ENCODE measurements at regions of chr10 and their contacts with region 1.

Region 1: DNA sequence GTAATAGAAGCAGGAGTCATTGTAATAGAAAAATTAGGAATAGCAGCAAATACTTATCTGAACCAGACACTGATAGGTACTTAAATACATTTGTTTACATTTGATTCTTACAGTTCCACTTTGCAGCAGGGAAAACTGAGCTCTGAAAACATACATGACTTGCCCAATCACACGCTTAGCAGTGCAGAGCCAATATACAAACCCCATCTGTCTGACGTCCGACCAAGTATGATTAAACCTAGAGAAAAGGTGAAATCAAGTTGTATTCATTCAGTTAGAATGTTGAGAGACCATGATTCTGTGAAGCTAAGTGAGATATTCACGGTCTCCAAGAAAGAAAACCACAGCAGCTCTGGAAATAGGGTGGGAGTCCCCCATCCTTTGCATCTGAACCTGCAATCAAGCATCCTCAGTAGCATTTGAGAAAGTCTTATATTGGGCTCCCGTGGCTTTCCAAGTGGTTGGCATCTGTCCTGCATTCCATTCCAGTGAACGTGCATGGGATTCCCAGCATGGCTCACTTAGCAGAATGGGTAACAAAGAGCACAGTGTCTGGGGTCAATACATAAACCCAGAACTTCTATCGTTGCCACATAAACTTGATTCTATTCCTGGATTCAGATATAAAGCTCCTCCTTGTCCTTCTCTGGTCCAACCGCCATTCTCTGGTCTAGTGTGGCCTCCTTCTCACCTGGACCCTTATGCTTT is 148.7 kb upstream of the RSU1 start:
- DNase-seq: peak; percentile 91
- ATAC-seq: peak; percentile 90
- H3K4me3 ChIP-seq: no peak overlapping the region
- H3K27ac ChIP-seq: peak overlapping the region; percentile 89
- H3K4me1 ChIP-seq: peaks cover 33% of the 10 kb centered on the region
- H3K27me3 ChIP-seq: no peaks in the 10 kb centered on the region
- CTCF ChIP-seq: no peak

Region 2: GRCh38 chr10:16870331-16870730 is 95.6 kb before region 1 on chr10:
- CTCF ChIA-PET with region 1: no interaction called
- POLR2A ChIA-PET with region 1: no interaction called
- intact Hi-C with region 1: no loop called
- DNase-seq: no peak
- ATAC-seq: no peak
- H3K4me3 ChIP-seq: no peak overlapping the region
- H3K27ac ChIP-seq: no peak overlapping the region
- H3K4me1 ChIP-seq: peaks cover 8% of the 10 kb centered on the region; the same call in 1 of the 2 replicates
- H3K27me3 ChIP-seq: no peaks in the 10 kb centered on the region
- CTCF ChIP-seq: no peak

Region 3: DNA sequence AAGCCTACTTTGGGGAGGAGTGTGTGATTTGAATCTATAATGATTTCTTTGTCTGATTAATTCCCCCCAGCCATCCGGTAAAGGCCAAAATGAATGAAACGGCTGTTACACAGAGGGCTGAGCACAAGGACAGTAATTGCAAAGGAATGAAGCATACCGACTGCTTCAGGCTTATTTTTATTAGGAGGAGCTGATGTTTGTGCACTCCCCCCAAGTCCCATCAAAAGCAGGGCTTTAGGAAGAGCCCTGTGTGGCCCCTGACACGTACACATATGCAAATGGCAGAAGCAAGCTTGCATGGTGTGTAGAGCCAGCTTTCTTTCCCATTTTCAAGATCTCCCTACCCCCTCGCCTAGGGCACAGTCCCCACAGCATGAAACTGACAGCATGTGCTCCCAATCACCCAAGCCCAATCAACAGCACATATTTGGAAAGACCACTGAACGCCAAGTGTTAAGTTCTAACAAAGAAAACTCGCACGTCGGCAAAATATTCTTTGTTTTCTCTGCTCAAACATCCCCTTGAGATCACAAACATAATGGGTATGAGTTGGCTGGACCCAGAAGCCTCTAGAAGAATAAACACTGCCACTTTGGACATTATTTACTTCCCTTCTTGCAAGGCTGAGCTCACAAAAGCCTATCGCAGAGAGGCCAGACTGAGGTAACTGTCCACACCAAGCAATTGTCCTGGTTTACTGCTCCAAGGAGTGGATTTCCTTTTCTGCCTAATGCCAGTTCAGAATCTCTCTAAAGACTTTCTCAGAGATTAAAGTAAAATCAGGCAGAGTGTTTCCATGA is 20.7 kb after region 1 on chr10:
- CTCF ChIA-PET with region 1: no interaction called
- POLR2A ChIA-PET with region 1: no interaction called
- intact Hi-C with region 1: loop called (anchors 2 kb)
- DNase-seq: peak; percentile 75
- ATAC-seq: peak; percentile 83
- H3K4me3 ChIP-seq: no peak overlapping the region
- H3K27ac ChIP-seq: peak overlapping the region; percentile 82
- H3K4me1 ChIP-seq: peaks cover 23% of the 10 kb centered on the region
- H3K27me3 ChIP-seq: no peaks in the 10 kb centered on the region
- CTCF ChIP-seq: no peak